Calu3 (cell line): ENCODE measurements at regions of chr15 and their contacts with region 1.

Region 1: DNA sequence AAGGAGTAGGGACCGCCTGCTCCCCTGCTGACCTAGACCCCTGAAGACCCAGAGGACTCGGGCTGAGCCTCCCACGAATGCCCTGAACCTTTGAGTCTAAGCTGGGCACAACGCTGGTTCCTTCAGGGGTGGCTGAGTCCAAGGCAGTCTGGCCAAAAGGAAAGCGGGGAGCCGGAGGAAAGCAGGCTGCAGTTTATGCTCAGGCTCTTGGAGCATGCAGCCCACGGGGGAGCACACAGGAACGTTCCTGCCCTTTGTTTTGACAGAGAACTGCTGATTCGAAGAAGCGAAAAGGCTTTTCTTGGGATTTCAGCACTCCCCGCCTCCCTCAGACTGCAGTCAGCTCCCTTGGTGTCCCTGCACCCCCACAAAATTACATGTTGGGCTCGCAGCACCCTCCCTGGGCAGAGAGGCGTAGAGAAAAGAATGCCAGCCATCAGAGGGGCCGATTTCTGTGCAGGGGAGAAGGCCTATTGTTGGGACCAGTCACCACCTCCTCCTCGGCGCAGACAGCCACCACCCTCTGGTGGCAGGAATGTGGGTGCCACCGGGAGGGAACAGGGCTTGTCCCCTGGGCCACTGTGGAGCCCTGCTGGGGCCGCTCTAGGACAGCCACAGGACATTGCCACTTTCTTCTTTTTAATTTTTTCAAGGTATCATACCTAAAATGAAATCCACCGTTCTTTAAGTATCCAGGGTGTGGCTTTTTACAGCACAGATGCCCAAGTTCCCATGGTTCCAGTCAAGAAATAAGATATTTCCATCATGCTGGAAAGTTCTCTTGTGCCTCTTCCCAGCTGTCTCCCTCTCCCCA is 72.2 kb downstream of the SMAD6 start:
- DNase-seq: peak; percentile 97
- H3K4me3 Mint-ChIP-seq: no peak overlapping the region
- H3K27ac Mint-ChIP-seq: peak overlapping the region; percentile 76
- H3K4me1 Mint-ChIP-seq: peaks cover 87% of the 10 kb centered on the region
- H3K27me3 Mint-ChIP-seq: no peaks in the 10 kb centered on the region
- CTCF ChIP-seq: peak; percentile 98

Region 2: DNA sequence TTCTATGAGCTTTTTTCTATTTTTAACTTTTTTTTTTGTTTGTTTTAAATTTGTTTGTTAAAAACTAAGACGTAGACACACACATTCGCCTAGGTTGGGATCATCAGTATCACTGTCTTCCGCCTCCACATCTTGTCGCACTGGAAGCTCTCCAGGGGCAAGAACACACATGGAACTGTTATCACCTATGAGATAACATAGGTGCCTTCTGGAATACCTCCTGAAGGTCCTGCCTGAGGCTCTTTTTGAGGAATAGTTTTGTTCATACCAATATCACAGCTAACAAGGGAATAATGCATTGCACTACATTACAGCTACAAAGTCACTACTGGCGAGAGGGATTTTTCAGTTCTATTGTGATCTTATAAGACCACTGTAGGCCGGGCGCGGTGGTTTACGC is 239.2 kb before region 1 on chr15:
- CTCF ChIA-PET with region 1: no interaction called
- intact Hi-C with region 1: no loop called
- DNase-seq: no peak
- H3K4me3 Mint-ChIP-seq: no peak overlapping the region
- H3K27ac Mint-ChIP-seq: no peak overlapping the region
- H3K4me1 Mint-ChIP-seq: no peaks in the 10 kb centered on the region
- H3K27me3 Mint-ChIP-seq: no peaks in the 10 kb centered on the region
- CTCF ChIP-seq: no peak

Region 3: DNA sequence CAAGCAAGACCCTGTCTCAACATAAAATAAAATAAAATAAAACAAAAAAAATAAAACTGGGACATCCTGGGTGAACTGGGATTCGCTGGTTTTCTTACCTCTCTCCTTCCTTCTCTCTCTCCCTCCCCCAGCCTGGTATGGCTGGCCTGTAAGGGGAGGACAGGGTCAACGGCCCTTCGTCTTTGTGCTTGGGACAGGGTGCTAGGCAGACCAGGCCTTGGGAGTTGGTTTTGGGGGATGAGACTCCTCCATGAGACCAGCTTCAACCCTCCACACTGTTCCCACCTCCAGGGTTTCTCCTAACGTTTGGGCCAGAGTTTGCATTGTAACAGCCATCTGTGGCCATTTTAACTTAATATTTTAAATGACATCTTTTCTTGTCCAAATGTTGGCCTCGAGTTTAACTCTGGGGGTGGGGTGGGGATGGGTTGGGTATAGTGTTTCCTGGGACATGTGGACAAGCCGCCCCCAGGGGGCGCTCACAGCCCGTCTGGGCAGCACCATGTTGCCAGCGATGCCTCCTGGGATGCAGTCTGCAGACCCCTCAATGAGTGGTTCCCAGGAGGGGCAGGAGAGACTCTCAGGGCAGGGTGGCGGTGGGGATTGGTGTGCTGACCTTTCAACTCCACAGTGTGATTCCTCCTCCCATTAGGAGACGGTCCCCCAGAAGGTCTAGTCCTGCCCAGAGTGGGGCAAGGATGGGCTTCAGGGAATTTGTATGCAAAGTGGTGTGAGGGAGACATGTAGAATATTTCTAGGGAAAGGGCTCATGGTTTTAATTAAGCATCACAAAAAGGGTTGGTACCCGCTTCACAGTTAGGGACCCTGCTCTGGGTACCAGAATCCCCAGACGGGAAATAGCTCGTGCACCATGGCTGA is 170.7 kb before region 1 on chr15:
- CTCF ChIA-PET with region 1: no interaction called
- intact Hi-C with region 1: loop called (anchors 5 kb)
- DNase-seq: peak; percentile 82
- H3K4me3 Mint-ChIP-seq: no peak overlapping the region
- H3K27ac Mint-ChIP-seq: no peak overlapping the region
- H3K4me1 Mint-ChIP-seq: no peaks in the 10 kb centered on the region
- H3K27me3 Mint-ChIP-seq: peaks cover 34% of the 10 kb centered on the region
- CTCF ChIP-seq: peak; percentile 90

Region 4: DNA sequence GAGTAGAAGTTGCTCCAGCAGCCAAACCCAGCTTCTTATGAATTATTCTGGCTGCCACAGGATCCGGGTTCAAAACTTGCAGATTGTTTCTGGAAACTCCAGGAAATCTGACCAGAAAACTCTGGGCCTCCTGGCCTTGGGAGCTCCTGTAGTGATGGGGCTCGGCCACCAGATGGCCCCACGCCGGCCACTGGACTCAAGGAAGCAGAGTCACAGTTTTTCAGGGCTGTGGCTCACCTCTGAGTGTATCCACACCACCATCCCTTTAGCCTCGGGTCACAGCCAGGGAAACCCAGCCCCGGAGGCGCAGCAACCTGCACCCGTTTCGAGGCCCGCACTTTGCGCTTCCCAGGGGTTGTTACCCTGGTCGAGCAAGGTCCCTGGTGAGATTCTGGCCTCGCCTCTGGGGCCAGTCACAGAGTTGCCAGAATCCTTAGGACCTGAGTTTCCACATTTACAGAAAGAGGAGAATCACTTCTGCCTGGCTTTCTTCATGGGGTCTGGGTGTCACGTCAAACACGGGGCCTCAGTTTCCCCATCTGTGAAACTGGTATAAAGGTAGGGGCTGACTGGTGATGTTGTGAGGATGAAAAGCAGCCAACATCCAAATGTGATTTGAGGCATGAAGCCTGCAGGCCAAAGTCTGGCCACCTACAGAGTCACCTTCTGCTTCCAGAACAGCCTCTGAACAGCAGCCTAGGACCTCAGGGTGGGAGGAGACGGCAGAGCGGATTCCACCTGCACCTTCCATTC is 154.9 kb before region 1 on chr15:
- CTCF ChIA-PET with region 1: interaction called, 4 read pairs
- intact Hi-C with region 1: loop called (anchors 2 kb)
- DNase-seq: peak; percentile 92
- H3K4me3 Mint-ChIP-seq: no peak overlapping the region
- H3K27ac Mint-ChIP-seq: no peak overlapping the region
- H3K4me1 Mint-ChIP-seq: peaks cover 30% of the 10 kb centered on the region
- H3K27me3 Mint-ChIP-seq: peaks cover 32% of the 10 kb centered on the region
- CTCF ChIP-seq: peak; percentile 78

Region 5: GRCh38 chr15:66707310-66708082 is 66.7 kb before region 1 on chr15:
- CTCF ChIA-PET with region 1: interaction called, 35 read pairs
- intact Hi-C with region 1: no loop called
- DNase-seq: peak; percentile 60
- H3K4me3 Mint-ChIP-seq: peak overlapping the region; percentile 98
- H3K27ac Mint-ChIP-seq: no peak overlapping the region
- H3K4me1 Mint-ChIP-seq: peaks cover 21% of the 10 kb centered on the region
- H3K27me3 Mint-ChIP-seq: no peaks in the 10 kb centered on the region
- CTCF ChIP-seq: no peak

Region 6: GRCh38 chr15:66720206-66721006 is 53.8 kb before region 1 on chr15:
- CTCF ChIA-PET with region 1: no interaction called
- intact Hi-C with region 1: loop called (anchors 5 kb)
- DNase-seq: peak; percentile 67
- H3K4me3 Mint-ChIP-seq: no peak overlapping the region
- H3K27ac Mint-ChIP-seq: no peak overlapping the region
- H3K4me1 Mint-ChIP-seq: peaks cover 69% of the 10 kb centered on the region
- H3K27me3 Mint-ChIP-seq: no peaks in the 10 kb centered on the region
- CTCF ChIP-seq: no peak